HEK293 (cell line): ENCODE measurements at regions of chr9 and their contacts with region 1.

Region 1: GRCh38 chr9:121557581-121558447 is 58.2 kb upstream of the GGTA1 start:
- H3K4me3 ChIP-seq: no peak overlapping the region
- H3K27ac ChIP-seq: no peak overlapping the region; the same call in 1 of the 2 replicates
- H3K4me1 ChIP-seq: peaks cover 2% of the 10 kb centered on the region; the same call in 1 of the 2 replicates
- CTCF ChIP-seq: no peak

Region 2: DNA sequence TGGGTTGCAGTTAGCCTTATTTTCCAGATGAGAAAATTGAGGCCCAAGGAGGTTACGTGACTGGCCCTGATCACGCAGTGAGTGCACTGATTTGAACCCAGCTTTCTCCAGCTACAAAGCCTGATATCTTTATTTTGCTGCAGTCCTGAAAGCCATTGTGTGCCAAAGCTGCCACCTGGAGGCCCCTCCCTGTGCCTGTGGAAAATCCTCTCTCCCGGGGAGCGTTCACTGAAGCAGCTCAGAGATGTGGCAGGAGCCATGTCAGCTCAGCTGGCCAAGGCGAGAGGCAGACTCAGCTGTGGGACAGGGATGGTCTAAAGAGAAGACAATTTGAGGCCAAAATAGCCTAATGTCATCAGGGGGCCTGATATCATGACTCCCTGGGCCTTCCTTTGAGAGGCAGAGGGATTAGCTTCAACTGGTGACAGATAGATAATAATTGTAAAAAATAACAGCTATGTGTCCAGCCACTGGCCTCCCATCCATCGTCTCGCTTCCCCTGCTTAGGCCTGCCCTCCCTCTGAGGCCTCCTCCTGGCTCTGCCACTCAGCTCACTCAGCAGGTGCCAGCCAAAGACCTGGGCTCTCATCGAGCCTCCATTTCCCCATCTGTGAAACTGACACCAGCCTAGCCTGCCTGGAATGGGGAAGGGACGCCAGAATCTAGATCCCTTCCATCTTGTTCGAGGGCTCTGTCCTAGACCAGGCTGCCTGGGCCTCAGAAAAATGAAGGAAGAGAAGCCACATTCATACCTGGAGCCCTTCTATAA is 16.1 kb after region 1 on chr9:
- CTCF ChIA-PET with region 1: interaction called, 12 read pairs
- POLR2A ChIA-PET with region 1: no interaction called
- H3K4me3 ChIP-seq: no peak overlapping the region
- H3K27ac ChIP-seq: no peak overlapping the region
- H3K4me1 ChIP-seq: no peaks in the 10 kb centered on the region
- CTCF ChIP-seq: no peak

Region 3: DNA sequence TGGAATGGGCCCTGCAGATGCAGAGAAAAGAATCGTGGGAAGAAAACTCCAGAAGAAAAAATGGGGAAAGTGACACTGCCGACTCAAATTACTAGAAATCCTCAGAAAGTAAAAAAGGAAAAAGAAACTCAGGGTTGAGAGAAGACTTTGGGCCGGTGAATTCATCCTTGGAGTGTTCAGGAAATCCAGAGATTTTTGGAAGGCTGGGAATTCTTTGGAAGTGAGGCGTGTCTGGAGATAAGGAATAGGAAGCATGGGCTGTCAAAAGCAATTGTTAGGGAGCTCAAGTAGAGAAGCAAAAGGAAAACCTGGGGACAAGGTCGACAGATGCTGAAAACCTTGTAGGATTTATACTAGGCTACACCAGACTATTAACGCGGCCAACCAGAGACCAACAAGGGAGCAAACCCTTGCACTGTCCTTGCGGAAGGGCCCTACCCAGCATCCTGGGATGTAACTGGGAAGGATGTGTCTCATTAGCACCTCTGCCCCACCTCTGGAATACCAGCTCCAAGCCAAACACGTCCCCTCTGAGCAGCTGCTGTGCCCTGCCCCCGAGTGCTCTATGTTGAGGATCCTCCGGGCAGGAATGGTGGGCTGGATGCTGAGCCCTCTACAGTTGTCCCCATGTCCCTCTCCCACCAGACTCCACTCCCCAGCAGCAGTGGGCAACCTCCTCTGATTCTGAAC is 105.2 kb after region 1 on chr9:
- CTCF ChIA-PET with region 1: no interaction called
- POLR2A ChIA-PET with region 1: no interaction called
- H3K4me3 ChIP-seq: no peak overlapping the region
- H3K27ac ChIP-seq: no peak overlapping the region
- H3K4me1 ChIP-seq: no peaks in the 10 kb centered on the region
- CTCF ChIP-seq: no peak